ENCODE measurements at regions of chr10 and their contacts with region 1.

Region 1: DNA sequence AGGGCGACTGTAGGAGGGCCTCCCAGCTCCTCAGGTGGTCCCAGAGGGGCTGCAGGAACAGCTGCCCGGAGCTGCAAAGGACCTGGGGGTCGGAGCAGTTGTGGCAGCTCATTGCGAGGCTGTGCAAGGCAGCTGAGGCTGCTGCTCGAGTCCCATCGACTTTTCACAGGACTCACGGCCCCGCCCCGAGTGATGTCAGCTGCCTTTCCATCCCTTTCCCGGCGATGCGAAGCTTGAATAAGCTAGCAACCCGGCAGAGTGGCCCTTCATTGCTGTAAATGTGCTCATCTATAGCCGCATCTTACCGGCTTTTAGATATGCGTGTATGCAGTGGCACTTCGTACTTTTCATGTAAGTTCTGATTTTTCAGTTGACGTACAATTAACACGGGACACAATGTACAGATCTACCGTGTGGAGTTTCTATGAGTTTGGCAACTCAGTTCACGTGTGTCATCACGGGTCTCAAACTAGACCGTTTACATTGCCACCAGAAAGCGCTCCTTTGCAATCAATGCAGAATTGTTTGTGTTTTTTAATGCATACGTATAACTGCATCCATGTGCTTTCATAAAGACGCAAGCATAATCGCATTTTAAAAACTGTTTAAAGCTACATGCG is at the start of gene CH25H:
- DNase-seq: peak; percentile 72 to 87
- ATAC-seq: peak; percentile 85 to 96 (median 90)
- H3K4me3 ChIP-seq: peak within 1 kb of the TSS; percentile 21 to 67 (median 56)
- H3K27ac ChIP-seq: peak within 1 kb of the TSS; percentile 78 to 93 (median 83)
- H3K4me1 ChIP-seq: peaks cover 0 to 28% (median 20%) of the 10 kb centered on the region in 9 donors
- H3K27me3 ChIP-seq: peaks cover 0 to 88% (median 20%) of the 10 kb centered on the region in 7 donors
- CTCF ChIP-seq: no peak
- total RNA-seq, gene CH25H: 0.31 to 8.8 (median 0.76) TPM in 9 of 10 donors, not detected in the other

Region 2: GRCh38 chr10:88553116-88553752 is 654.1 kb before region 1 on chr10:
- intact Hi-C with region 1: no loop called
- DNase-seq: peak in 1 of 2 donors; percentile 54
- ATAC-seq: peak; percentile 72 to 96 (median 86)
- H3K4me3 ChIP-seq: no peak overlapping the region
- H3K27ac ChIP-seq: no peak overlapping the region
- H3K4me1 ChIP-seq: peaks cover 0 to 3% (median 0%) of the 10 kb centered on the region in 9 donors
- H3K27me3 ChIP-seq: no peaks in the 10 kb centered on the region
- CTCF ChIP-seq: peak; percentile 44 to 85 (median 78)

Region 3: GRCh38 chr10:89086801-89087521 is 120.3 kb before region 1 on chr10:
- intact Hi-C with region 1: loop called in 3 of 10 experiments (anchors 5 to 10 kb)
- DNase-seq: peak; percentile 70 to 85
- ATAC-seq: peak; percentile 90 to 95 (median 94)
- H3K4me3 ChIP-seq: peak overlapping the region in 8 of 10 donors; percentile 1 to 45 (median 22)
- H3K27ac ChIP-seq: peak overlapping the region; percentile 44 to 89 (median 83)
- H3K4me1 ChIP-seq: peaks cover 3 to 62% (median 23%) of the 10 kb centered on the region in 9 donors
- H3K27me3 ChIP-seq: no peaks in the 10 kb centered on the region
- CTCF ChIP-seq: peak in 1 of 9 donors; percentile 10

Region 4: DNA sequence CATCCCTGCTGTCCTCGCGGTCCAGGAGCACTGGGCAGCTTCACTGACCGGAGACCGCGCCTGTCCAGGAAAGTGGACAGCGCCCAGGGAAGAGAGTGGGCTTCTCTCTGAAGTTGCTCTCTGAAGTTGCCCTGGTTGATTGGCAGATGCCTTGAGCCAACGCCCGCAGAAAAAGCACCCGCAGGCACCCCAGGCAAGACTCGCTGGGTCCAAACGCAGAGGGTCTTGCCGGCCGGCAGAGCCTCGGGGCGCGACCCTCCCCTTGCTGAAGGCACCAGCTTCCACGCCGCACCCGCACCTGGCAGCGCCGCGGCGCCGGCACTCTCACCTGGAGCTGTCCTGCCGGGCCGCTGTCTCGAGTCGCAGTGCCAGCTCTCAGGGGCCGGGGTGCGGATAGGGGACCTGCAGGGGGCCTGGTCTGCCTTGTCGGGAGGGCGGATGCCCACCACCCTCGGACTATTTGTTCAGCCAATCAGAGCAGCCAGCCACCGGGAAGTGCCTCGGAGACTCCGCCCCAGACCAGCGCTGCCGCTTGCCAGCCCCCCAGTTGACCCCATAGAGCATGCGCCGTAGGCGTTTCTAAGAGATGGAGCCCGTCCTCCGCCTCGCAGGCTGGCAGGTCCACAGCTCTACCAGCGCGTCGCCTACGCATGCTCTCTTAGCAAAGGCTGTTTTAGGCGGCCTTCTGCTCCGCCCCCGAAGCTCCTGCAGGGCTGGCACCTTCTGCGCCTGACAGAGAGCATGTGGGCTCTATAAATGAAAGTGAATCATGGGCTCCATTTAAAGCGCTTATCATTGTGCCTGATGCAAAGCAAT is 44.3 kb after region 1 on chr10 and contains the start of gene LIPA:
- intact Hi-C with region 1: no loop called
- DNase-seq: peak; percentile 95 to 96
- ATAC-seq: peak; percentile 99 to 100 (median 99)
- H3K4me3 ChIP-seq: peak within 1 kb of the TSS; percentile 79 to 99 (median 82)
- H3K27ac ChIP-seq: peak within 1 kb of the TSS; percentile 44 to 89 (median 82)
- H3K4me1 ChIP-seq: peaks cover 0 to 37% (median 8%) of the 10 kb centered on the region in 9 donors
- H3K27me3 ChIP-seq: no peaks in the 10 kb centered on the region
- CTCF ChIP-seq: no peak
- total RNA-seq, gene LIPA: 12.4 to 58.5 (median 15.3) TPM

Region 5: GRCh38 chr10:89262086-89263051 is 55.1 kb after region 1 on chr10:
- intact Hi-C with region 1: no loop called
- DNase-seq: no peak
- ATAC-seq: no peak
- H3K4me3 ChIP-seq: no peak overlapping the region
- H3K27ac ChIP-seq: peak overlapping the region in 2 of 10 donors; percentile 10 to 15
- H3K4me1 ChIP-seq: peaks cover 0 to 32% (median 11%) of the 10 kb centered on the region in 9 donors
- H3K27me3 ChIP-seq: no peaks in the 10 kb centered on the region
- CTCF ChIP-seq: no peak